Caco-2 (cell line): ENCODE measurements at regions of chr13 and their contacts with region 1.

Region 1: DNA sequence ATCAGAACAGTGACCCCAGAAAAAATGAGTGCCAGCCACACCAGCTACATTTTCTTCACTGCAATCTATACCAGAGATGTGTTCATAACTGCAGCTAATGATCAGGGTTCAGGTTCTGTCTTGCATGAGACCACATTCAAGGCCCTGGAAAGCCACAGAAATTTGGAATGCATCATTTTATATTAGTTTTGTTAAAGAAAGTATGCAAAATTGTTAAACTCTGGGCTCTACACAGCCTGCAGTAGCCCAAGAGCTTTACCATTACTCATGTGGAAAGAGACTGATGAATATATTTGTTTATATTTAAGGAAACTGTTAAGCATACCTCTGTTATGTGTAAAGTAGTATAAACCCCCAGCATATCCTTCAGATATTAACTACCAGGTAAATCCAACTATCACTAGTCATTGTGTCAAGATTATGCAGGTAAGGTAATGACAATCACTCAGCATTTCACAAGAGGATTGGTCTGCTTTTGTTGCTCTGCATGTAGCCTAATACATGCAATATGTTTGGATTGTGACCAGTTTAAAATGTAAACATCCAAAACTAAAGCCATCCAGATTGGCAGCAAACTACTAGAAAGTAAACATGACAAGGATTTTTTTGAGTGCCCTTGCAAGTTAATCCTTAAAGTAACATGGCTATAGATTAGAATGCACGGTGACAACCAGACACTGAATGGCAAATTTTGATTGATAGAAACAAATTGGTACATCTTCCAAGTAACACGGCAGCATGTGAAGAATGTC is 429.1 kb upstream of the ARGLU1 start:
- DNase-seq: peak; percentile 63 to 76
- H3K4me3 ChIP-seq: no peak overlapping the region
- H3K4me3 Mint-ChIP-seq: peak overlapping the region; percentile 32
- H3K27ac Mint-ChIP-seq: peak overlapping the region; percentile 50
- H3K4me1 ChIP-seq: peaks cover 21% of the 10 kb centered on the region
- H3K4me1 Mint-ChIP-seq: peaks cover 27% of the 10 kb centered on the region
- H3K27me3 ChIP-seq: no peaks in the 10 kb centered on the region
- H3K27me3 Mint-ChIP-seq: no peaks in the 10 kb centered on the region
- CTCF ChIP-seq: no peak

Region 2: GRCh38 chr13:106567474-106568298 is 429.4 kb before region 1 on chr13 and contains the start of gene ARGLU1:
- CTCF ChIA-PET with region 1: no interaction called
- POLR2A ChIA-PET with region 1: no interaction called
- intact Hi-C with region 1: loop called (anchors 1 kb)
- DNase-seq: peak; percentile 93 to 97
- H3K4me3 ChIP-seq: peak within 1 kb of the TSS; percentile 93
- H3K4me3 Mint-ChIP-seq: peak within 1 kb of the TSS; percentile 87
- H3K27ac Mint-ChIP-seq: peak within 1 kb of the TSS; percentile 95
- H3K4me1 ChIP-seq: peaks cover 41% of the 10 kb centered on the region
- H3K4me1 Mint-ChIP-seq: peaks cover 16% of the 10 kb centered on the region
- H3K27me3 ChIP-seq: no peaks in the 10 kb centered on the region
- H3K27me3 Mint-ChIP-seq: no peaks in the 10 kb centered on the region
- CTCF ChIP-seq: no peak
- total RNA-seq, gene ARGLU1: 127 and 137 TPM in 2 replicates

Region 3: GRCh38 chr13:106850973-106851650 is 145.9 kb before region 1 on chr13:
- CTCF ChIA-PET with region 1: no interaction called
- POLR2A ChIA-PET with region 1: no interaction called
- intact Hi-C with region 1: no loop called
- DNase-seq: no peak
- H3K4me3 ChIP-seq: no peak overlapping the region
- H3K4me3 Mint-ChIP-seq: no peak overlapping the region
- H3K27ac Mint-ChIP-seq: no peak overlapping the region
- H3K4me1 ChIP-seq: no peaks in the 10 kb centered on the region
- H3K4me1 Mint-ChIP-seq: no peaks in the 10 kb centered on the region
- H3K27me3 ChIP-seq: no peaks in the 10 kb centered on the region
- H3K27me3 Mint-ChIP-seq: no peaks in the 10 kb centered on the region
- CTCF ChIP-seq: no peak

Region 4: GRCh38 chr13:107018285-107018684 is 21.2 kb after region 1 on chr13:
- CTCF ChIA-PET with region 1: no interaction called
- POLR2A ChIA-PET with region 1: no interaction called
- intact Hi-C with region 1: loop called (anchors 1 kb)
- DNase-seq: peak in 1 of 2 experiments; percentile 33
- H3K4me3 ChIP-seq: no peak overlapping the region
- H3K4me3 Mint-ChIP-seq: peak overlapping the region; percentile 17
- H3K27ac Mint-ChIP-seq: peak overlapping the region; percentile 21
- H3K4me1 ChIP-seq: peaks cover 32% of the 10 kb centered on the region
- H3K4me1 Mint-ChIP-seq: peaks cover 21% of the 10 kb centered on the region
- H3K27me3 ChIP-seq: no peaks in the 10 kb centered on the region
- H3K27me3 Mint-ChIP-seq: no peaks in the 10 kb centered on the region
- CTCF ChIP-seq: no peak

Region 5: DNA sequence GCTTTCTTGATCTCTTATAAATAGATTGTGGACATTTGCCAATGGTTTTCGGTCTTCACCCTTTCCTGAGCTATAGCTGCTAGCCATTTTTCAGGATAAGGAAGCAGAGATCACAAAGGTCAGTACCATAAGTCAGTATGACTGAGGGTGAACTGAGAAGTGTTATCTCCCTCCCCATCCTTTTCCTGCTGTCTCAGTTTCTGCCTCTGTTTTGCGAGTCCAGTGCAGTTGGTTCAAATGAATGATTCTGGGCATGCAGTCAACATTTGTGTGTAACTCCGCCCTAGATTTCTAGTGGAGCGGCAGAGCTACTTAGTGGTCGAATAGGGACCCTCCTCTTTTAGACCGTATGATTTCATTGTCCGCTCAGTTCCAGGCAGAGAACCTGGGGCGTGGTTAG is 31.7 kb after region 1 on chr13:
- CTCF ChIA-PET with region 1: no interaction called
- POLR2A ChIA-PET with region 1: no interaction called
- intact Hi-C with region 1: no loop called
- DNase-seq: no peak
- H3K4me3 ChIP-seq: no peak overlapping the region
- H3K4me3 Mint-ChIP-seq: no peak overlapping the region
- H3K27ac Mint-ChIP-seq: no peak overlapping the region
- H3K4me1 ChIP-seq: no peaks in the 10 kb centered on the region
- H3K4me1 Mint-ChIP-seq: no peaks in the 10 kb centered on the region
- H3K27me3 ChIP-seq: no peaks in the 10 kb centered on the region
- H3K27me3 Mint-ChIP-seq: no peaks in the 10 kb centered on the region
- CTCF ChIP-seq: no peak

Region 6: GRCh38 chr13:107065036-107065435 is 68.0 kb after region 1 on chr13:
- CTCF ChIA-PET with region 1: no interaction called
- POLR2A ChIA-PET with region 1: interaction called, 3 read pairs
- intact Hi-C with region 1: loop called (anchors 2 kb)
- DNase-seq: no peak
- H3K4me3 ChIP-seq: no peak overlapping the region
- H3K4me3 Mint-ChIP-seq: no peak overlapping the region
- H3K27ac Mint-ChIP-seq: no peak overlapping the region
- H3K4me1 ChIP-seq: peaks cover 7% of the 10 kb centered on the region; the same call in 1 of the 2 replicates
- H3K4me1 Mint-ChIP-seq: peaks cover 7% of the 10 kb centered on the region
- H3K27me3 ChIP-seq: no peaks in the 10 kb centered on the region
- H3K27me3 Mint-ChIP-seq: no peaks in the 10 kb centered on the region
- CTCF ChIP-seq: no peak